ENCODE measurements at regions of chr10 and their contacts with region 1.

Region 1: DNA sequence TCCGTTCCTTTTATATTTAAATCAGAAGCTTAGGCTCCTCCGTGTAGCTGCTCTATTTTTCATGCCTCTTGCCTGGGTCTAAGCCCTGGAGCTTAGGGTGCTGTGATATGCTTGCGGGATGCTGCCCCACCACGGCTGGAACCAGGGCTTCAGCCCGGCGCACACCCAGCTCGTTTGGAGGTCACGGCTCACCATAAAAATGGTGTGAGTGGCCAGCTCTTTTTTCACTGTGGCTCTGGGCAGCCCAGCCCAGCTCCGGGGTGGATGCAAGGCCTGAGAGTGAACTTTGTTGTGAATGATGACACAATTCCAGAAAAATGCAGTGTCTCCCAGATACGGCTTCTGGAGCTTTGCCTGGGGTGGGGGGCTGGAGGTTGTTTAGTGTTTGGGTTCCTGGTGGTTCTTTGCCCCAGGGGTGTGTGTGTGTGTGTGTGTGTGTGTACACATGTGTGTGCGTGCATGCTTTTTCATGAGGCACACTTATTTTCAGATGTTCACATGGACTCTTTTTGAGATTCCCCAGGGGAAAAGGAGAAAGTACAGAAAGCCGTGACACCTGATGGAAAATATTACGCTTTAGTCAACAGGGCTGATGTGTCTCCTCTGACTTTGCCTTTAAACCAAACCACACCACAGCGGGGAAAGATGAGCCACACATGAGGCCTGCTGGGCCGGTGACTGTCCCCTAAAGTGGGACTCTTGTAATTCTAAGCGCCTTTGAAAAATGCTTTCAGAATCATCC is 46.2 kb downstream of the GRK5 start:
- DNase-seq: peak; percentile 87
- ATAC-seq: peak; percentile 83
- H3K4me3 ChIP-seq: peak overlapping the region; percentile 41; the same call in 1 of the 2 replicates
- H3K27ac ChIP-seq: peak overlapping the region; percentile 96
- H3K4me1 ChIP-seq: peaks cover 51% of the 10 kb centered on the region
- H3K27me3 ChIP-seq: no peaks in the 10 kb centered on the region
- CTCF ChIP-seq: no peak; the same call in 1 of the 2 replicates

Region 2: DNA sequence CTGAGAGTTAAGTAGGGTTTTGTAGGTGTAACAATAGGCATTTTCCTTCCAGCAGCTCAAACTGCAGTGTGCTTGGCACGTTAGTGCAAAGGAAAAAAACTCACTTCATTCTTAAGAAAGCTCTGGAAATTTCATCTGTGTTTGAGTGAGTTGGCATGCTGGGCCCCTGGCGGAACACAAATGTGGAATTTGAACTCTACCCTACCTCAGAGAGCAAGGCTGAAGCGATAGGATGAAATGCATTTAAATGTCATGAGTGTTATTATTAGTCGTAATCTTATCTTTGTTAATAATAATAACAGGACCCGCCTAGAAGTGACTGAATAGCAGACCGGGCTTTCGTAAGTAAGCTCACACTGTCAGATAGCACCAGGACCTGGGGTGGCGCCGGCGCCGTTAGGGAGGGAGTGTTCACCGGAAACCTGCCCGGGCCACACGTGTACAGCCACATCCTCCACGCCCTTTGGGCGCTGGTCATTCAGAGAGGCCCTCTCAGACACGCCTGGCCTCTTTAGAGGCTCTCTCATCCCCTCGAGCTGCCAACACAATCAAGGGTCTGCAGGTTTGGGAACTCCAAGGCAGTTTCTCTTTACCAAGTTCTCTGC is 17.3 kb after region 1 on chr10:
- CTCF ChIA-PET with region 1: interaction called, 5 read pairs
- POLR2A ChIA-PET with region 1: interaction called, 9 read pairs
- intact Hi-C with region 1: loop called (anchors 1 kb)
- DNase-seq: peak; percentile 50
- ATAC-seq: peak; percentile 85
- H3K4me3 ChIP-seq: peak overlapping the region; percentile 45; the same call in 1 of the 2 replicates
- H3K27ac ChIP-seq: peak overlapping the region; percentile 84
- H3K4me1 ChIP-seq: peaks cover 22% of the 10 kb centered on the region
- H3K27me3 ChIP-seq: no peaks in the 10 kb centered on the region
- CTCF ChIP-seq: no peak